AG04450 (cell line): ENCODE measurements at regions of chr11 and their contacts with region 1.

Region 1: DNA sequence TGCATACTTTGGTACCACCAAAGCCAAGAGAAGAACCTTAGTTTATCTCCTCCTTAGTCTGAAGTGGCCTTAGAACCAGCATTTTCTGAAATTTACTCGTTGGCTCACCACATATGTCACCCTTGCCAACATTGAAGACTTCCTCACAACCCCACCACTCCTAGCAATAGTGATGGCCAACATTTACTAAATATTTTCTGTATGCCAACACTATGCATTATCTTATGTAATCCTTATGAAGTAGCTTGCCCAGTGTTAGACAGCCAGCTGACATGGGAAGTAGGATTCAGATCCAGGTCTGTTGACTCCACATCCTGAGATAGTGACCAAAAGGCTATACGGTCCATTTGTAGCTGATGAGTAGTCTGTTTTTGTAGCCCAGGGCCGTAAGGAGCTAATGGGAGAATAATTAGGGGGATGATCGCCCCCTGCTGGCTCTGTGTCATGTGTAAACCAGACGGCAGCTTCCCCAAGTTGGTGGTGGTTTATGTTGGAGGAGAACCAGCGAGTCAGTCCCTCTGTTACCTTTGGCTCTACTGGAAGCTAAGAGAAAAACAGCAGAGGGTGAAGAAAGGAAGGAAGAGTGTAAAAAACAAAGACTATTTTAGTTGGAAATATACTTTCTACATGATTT is 120.5 kb upstream of the RASSF10 start:
- DNase-seq: peak; percentile 81
- H3K4me3 ChIP-seq: no peak overlapping the region
- H3K27ac ChIP-seq: peak overlapping the region; percentile 74
- H3K27me3 ChIP-seq: no peaks in the 10 kb centered on the region
- CTCF ChIP-seq: peak; percentile 80

Region 2: GRCh38 chr11:12680246-12680939 is 208.2 kb before region 1 on chr11:
- CTCF ChIA-PET with region 1: interaction called, 21 read pairs
- POLR2A ChIA-PET with region 1: interaction called, 4 read pairs
- DNase-seq: peak; percentile 65
- H3K4me3 ChIP-seq: peak overlapping the region; percentile 23
- H3K27ac ChIP-seq: peak overlapping the region; percentile 31
- H3K27me3 ChIP-seq: no peaks in the 10 kb centered on the region
- CTCF ChIP-seq: no peak

Region 3: GRCh38 chr11:12712132-12712531 is 176.5 kb before region 1 on chr11:
- CTCF ChIA-PET with region 1: no interaction called
- POLR2A ChIA-PET with region 1: no interaction called
- DNase-seq: no peak
- H3K4me3 ChIP-seq: no peak overlapping the region
- H3K27ac ChIP-seq: no peak overlapping the region
- H3K27me3 ChIP-seq: no peaks in the 10 kb centered on the region
- CTCF ChIP-seq: no peak

Region 4: DNA sequence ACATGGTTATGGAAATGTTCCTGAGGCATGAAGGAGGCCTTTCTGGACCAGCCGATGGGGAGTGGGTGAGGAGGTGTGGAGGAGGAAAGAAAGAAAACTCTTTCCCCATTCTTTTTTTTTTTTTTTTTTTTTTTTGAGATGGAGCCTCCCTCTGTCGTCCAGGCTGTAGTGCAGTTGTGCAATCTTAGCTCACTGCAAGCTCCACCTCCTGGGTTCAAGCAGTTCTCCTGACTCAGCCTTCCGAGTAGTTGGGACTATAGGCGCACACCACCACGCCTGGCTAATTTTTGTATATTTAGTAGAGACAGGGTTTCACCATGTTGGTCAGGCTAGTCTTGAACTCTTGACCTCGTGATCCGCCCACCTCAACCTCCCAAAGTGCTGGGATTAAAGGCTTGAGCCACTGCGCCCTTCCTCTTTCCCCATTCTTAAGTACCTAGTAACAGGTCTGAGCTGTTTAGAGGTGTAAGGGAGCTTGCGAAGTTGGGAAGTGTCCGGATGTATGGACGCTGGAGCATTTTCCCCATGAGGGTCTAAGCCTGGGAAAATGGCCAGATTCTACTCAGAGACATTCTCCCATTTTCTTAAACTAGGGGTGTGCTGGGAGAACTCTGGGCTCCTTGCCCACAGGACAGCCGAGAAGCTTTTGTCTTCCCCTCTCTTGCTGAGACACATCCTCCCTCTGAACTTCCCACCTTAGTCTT is 78.6 kb before region 1 on chr11:
- CTCF ChIA-PET with region 1: interaction called, 4 read pairs
- POLR2A ChIA-PET with region 1: interaction called, 13 read pairs
- DNase-seq: no peak
- H3K4me3 ChIP-seq: no peak overlapping the region
- H3K27ac ChIP-seq: peak overlapping the region; percentile 60
- H3K27me3 ChIP-seq: no peaks in the 10 kb centered on the region
- CTCF ChIP-seq: no peak

Region 5: GRCh38 chr11:12868315-12869073 is 20.1 kb before region 1 on chr11:
- CTCF ChIA-PET with region 1: interaction called, 22 read pairs
- POLR2A ChIA-PET with region 1: interaction called, 4 read pairs
- DNase-seq: no peak
- H3K4me3 ChIP-seq: no peak overlapping the region
- H3K27ac ChIP-seq: no peak overlapping the region
- H3K27me3 ChIP-seq: no peaks in the 10 kb centered on the region
- CTCF ChIP-seq: peak; percentile 48

Region 6: GRCh38 chr11:12876340-12876739 is 12.3 kb before region 1 on chr11:
- CTCF ChIA-PET with region 1: interaction called, 17 read pairs
- POLR2A ChIA-PET with region 1: no interaction called
- DNase-seq: no peak
- H3K4me3 ChIP-seq: no peak overlapping the region
- H3K27ac ChIP-seq: no peak overlapping the region
- H3K27me3 ChIP-seq: no peaks in the 10 kb centered on the region
- CTCF ChIP-seq: no peak